ENCODE measurements at regions of chr2 and their contacts with region 1.

Region 1: DNA sequence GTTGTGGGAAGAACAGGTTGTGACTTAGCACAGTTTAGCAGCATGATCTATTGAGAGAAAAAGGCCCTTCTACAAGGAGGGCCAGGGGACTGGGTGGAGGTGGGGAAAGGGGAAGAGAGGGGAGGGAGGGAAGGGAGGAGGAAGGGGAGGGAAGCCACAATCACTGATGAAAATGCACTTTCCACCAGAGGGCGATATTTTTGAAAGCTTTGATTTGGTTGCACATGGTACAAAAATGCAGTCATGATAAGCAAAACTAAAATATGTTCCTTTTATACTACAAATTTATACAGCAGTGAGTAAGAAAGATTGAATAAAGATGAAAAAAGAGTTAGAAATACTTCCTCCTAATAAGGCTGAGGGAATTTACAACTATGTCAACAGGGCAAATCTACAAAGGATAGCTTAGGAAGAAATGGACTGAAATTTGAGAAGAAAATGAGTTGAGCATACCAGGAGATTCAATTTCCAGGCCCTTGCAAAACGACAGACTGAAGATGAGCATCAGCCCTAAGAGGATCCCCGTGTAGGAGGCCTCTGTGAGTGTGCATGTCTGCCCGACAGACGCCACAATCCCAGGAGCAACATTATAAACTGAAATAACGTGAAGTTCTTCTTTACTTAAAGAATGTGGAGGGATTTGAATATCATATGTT is 17.2 kb downstream of the SH3YL1 start:
- DNase-seq: peak; percentile 30
- ATAC-seq: peak; percentile 57
- H3K4me3 Mint-ChIP-seq: no peak overlapping the region
- H3K27ac Mint-ChIP-seq: no peak overlapping the region
- H3K4me1 Mint-ChIP-seq: peaks cover 4% of the 10 kb centered on the region
- H3K27me3 Mint-ChIP-seq: no peaks in the 10 kb centered on the region

Region 2: DNA sequence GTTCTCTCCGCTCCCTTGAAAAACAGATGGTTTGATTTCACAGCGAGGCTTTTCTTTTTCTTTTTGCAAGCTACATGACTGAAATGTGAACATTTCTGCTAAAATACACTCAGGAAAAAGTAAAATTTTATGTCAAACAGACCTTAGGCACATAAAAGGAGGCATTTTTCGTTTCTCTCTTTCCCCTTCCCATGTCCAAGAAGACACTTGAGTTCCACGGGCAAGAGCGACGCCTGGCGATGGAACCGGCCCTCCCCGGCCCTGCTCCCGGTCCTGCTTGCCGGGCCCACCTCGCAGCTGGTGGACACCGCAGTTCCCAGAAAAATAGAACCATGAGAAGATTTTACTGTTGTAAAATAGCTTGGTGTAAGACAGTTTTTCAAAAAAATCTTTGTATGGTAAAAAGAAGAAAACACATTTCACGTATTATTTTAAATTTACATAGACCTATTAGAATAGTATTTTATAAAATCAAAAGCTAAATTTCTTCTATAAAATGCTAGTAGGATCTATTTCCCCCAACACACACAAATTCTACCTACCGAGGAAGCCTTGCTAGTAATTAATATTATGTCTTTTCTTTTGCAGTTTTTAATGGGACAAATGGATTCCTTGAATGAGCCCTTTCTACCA is 43.6 kb after region 1 on chr2:
- CTCF ChIA-PET with region 1: interaction called, 13 read pairs
- POLR2A ChIA-PET with region 1: no interaction called
- intact Hi-C with region 1: loop called in 1 of 2 experiments (anchors 1 kb)
- DNase-seq: peak; percentile 74
- ATAC-seq: peak; percentile 61
- H3K4me3 Mint-ChIP-seq: peak overlapping the region; percentile 50
- H3K27ac Mint-ChIP-seq: no peak overlapping the region
- H3K4me1 Mint-ChIP-seq: peaks cover 5% of the 10 kb centered on the region
- H3K27me3 Mint-ChIP-seq: peaks cover 41% of the 10 kb centered on the region

Region 3: DNA sequence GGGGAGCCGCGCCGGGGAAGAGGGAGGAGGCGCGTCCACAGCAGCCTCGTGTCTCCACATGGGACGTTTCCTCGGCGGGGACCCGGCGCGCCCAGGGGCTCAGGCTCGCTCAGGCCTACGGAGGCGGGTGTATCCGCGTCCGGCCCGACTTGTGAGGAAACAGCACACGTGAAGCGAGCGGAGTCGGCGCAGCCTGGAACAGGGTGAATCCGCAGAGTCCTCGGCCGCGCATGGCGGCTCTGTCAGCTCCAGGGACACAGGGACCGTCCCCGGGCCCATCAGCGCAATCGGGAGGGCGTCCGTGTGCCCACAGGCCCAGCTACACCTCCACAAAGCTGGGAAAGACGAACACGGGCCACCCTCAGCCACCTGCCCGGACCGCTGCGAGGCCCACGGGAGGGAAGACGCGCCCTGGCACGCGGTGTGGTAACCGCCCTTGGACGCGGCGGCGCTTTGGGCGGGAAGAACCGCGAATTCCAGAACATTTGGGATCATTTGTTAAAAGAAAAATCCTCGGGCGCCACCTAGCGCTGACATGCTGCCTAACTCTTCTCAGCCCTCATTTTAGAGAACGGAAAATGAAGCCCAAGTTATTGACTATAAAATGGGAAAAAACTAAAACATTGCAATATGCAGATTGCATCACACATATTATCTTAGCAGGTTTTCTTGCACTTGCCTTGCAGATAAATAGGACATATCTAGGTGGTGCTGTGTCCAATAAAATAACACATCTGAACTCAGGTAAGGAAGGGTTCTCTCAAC is 390.2 kb after region 1 on chr2:
- CTCF ChIA-PET with region 1: interaction called, 6 read pairs
- POLR2A ChIA-PET with region 1: no interaction called
- intact Hi-C with region 1: loop called in 1 of 2 experiments (anchors 1 kb)
- DNase-seq: peak; percentile 72
- ATAC-seq: peak; percentile 76
- H3K4me3 Mint-ChIP-seq: peak overlapping the region; percentile 51
- H3K27ac Mint-ChIP-seq: no peak overlapping the region
- H3K4me1 Mint-ChIP-seq: peaks cover 6% of the 10 kb centered on the region
- H3K27me3 Mint-ChIP-seq: no peaks in the 10 kb centered on the region

Region 4: DNA sequence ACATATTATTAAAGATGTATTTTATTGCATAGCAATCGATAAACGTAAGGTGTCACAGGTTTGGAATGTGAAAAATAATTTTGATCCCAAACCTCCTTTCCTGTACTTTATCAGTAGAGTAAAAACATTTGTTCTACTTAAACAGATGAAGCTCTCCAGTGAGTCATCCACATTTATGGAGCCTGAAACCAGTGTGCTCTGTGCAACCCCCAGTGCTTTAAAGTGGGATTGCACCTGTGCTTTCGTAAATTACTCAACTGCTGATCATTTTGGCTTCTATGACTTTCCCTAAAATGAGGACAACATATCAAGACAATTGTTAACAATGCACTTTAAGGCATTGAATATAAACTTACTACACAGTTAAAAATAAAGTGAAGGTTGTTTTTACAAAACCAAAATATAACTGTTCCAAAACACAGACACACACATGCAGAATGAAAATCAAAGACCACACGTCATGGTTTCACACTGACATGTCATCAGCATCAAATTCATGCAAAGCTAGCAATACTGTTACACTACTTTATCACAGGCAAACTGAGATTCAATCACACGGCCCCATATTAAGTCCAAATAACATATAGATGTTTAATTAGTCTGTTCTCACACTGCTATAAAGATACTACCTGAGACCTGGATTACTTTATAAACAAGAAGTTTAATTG is 420.8 kb after region 1 on chr2:
- CTCF ChIA-PET with region 1: no interaction called
- POLR2A ChIA-PET with region 1: no interaction called
- intact Hi-C with region 1: loop called in 1 of 2 experiments (anchors 1 kb)
- DNase-seq: peak; percentile 65
- ATAC-seq: peak; percentile 96
- H3K4me3 Mint-ChIP-seq: no peak overlapping the region
- H3K27ac Mint-ChIP-seq: peak overlapping the region; percentile 61
- H3K4me1 Mint-ChIP-seq: peaks cover 26% of the 10 kb centered on the region
- H3K27me3 Mint-ChIP-seq: no peaks in the 10 kb centered on the region

Measured in activated CD4-positive, alpha-beta T cell treated with anti-CD3 and anti-CD28 coated beads for 36 hours (primary cell).